BJ (cell line): ENCODE measurements at regions of chr20 and their contacts with region 1.

Region 1: DNA sequence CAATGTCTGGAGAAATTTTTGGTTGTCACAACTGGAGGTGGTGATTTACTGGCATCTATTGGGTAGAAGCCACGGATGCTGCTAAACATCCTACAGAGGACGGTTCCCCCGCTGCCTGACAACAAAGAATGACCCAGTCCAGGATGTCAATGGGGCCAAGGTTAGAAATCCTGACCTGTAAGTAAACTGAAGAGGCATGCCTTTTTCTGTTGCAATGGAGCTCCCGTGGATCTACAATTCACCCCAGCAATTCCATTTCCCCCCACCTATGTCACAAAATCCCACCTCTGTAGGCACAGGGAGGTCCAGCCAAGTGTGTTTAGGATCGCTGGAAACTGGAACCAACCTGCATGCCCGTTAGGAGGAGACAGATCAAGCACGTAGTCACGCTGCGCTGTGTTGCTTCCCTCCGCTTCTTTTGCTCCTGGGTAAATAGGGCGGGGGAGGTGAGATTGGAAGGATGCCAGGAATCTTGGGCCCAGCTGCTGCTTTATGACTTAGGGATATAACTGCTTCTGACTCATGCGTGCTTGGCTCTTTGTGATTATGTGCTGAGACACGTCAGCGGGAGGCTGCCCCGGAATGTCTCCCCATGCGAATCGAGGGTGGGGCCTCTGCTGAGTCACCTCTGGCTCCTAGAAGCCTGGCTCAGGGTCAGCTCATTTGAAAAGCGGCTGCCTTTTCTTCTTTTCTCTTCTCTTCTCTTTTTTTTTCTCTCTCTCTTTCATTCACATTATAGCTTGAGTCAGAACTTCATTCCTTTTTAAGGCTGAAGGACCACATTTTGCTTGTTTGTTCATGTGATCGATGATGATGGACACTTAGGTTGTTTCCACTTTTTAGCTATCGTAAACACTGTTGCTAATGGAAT is 12.4 kb upstream of the PEDS1 start:
- DNase-seq: peak; percentile 99
- H3K4me3 ChIP-seq: peak overlapping the region; percentile 25
- H3K27me3 ChIP-seq: no peaks in the 10 kb centered on the region
- CTCF ChIP-seq: no peak

Region 2: DNA sequence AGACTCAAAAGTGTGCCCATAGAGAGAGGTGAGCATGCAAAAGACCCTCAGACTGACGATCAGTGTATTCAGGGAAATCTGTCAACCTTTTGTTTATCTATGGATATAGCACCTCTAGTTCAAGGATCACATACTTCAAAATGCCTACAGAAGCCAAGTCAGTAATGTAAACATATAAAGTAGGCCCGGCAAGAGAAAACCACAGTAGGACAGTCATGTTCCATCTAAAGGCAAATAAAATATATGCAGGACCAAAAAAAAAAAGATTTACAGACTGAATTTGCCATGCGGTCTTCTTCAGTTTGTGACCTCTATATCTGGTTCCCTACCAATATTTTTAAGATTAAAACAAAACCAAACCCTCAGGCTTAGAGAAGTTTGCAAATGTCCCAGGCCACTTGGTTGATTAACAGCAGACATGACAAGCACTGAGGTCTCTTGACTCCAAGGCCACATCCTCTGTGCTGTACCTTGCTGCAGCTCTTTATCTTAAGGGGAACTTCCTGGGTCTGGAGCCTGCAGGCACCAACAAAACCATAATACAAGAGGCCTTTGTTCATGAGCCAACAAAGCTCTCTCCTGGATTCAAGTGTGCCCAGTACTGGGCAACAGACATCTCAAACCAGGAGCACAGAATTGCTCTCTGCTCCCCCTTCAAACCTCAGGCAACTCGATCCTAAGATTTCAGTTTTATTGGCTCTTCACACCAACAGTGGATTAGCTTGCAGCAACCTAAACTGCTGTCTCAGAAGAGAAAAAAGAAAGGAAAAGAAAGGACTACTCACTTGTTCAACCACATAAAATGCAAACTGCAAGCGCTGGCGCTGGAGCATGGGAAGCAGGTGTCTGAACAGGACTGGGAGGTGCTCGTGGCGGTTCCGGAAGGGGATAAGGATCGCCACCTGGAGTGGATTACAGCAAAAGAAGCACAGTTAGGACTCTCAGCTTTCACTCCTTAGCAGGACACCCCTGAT is 523.9 kb before region 1 on chr20:
- CTCF ChIA-PET with region 1: no interaction called
- POLR2A ChIA-PET with region 1: no interaction called
- DNase-seq: no peak
- H3K4me3 ChIP-seq: no peak overlapping the region
- H3K27me3 ChIP-seq: no peaks in the 10 kb centered on the region
- CTCF ChIP-seq: no peak

Region 3: GRCh38 chr20:50012282-50013263 is 153.3 kb before region 1 on chr20:
- CTCF ChIA-PET with region 1: no interaction called
- POLR2A ChIA-PET with region 1: no interaction called
- DNase-seq: no peak
- H3K4me3 ChIP-seq: no peak overlapping the region
- H3K27me3 ChIP-seq: no peaks in the 10 kb centered on the region
- CTCF ChIP-seq: no peak

Region 4: DNA sequence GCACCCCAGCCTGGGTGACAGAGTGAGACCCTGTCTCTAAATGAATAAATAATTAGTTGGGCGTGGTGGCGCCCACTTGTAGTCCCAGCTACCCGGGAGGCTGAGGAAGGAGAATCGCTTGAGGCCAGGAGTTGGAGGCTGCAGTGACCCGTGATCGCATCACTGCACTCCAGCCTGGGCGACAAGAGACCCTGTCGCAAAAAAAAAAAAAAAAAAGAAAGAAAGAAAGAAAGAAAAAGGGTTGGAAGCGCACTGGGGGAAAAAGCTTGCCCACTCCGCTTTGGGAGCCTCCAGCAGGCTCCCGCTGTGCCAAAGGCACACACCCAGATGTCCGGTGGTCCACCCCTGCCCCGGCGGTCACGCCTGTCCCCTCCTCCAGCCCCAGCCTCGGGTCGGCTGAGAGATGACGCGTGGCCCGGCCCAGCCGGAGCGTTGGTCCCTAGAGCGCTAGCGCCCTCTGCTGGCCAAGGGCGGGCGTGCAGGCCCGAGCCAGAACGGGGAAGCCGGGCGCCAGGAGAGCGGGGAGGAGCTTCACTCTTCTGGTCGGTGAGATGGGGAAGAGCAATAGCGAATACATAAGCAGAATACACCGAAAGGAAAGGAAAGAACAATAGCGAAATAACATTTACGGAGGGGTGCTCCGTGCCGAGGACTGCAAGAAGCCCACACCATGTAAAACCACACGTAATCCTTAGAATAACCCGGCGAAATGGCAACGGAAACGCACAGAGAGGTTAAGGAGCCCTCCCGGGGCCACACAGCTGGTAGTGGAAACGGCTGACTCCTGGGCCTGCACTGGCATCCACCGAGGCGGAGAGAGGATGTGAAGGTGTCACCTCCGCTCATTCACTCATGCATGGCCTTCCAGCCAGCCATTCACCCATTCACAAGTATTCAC is 94.7 kb before region 1 on chr20:
- CTCF ChIA-PET with region 1: interaction called, 24 read pairs
- POLR2A ChIA-PET with region 1: no interaction called
- DNase-seq: no peak
- H3K4me3 ChIP-seq: peak overlapping the region; percentile 30
- H3K27me3 ChIP-seq: no peaks in the 10 kb centered on the region
- CTCF ChIP-seq: peak; percentile 99

Region 5: GRCh38 chr20:50115591-50116372 is 50.1 kb before region 1 on chr20:
- CTCF ChIA-PET with region 1: interaction called, 169 read pairs
- POLR2A ChIA-PET with region 1: interaction called, 4 read pairs
- DNase-seq: peak; percentile 82
- H3K4me3 ChIP-seq: peak overlapping the region; percentile 47
- H3K27me3 ChIP-seq: no peaks in the 10 kb centered on the region
- CTCF ChIP-seq: no peak

Region 6: DNA sequence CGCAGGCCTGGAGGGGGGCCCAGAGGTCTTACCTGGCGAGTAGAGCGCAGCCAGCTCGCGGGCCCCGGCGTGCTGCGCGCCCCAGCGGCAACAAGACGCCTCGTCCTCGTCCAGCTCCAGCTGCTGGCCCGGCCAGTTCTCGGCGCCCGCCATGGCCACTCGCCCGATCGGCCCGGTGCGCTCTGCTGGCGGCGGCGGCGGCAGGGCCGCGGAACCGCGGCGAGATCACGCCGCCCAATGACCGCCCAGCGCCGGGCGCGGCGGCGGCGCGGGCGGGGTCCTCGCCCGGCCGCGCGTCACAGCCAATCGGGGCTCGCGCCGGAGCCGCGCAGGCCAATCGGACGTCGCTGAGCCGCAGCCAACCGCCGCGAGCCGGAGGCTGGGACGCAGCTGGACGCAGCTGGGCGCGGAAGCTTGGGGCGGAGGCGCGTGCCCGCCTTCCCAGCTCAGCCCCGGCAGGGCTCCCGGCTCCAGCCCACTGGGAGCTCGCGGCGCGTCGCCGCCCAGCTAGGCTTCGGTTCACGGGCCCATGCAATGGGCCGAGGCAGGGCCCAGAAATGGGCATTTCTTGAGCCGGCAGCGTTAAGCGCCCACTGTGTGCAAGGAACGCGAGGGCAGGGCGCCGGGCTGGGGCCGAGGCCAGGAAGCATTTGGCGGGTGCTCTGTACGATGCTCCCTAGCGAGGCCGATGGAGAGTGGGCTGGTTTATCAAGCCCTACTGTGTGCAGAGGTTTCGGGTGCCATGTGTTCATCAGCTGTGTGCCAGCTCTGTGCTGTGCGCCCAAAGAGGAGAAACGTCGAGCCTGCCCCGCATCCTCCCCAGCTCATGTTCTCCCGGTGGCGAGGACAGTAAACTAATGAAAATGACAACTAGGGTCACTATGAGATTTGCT is 12.2 kb before region 1 on chr20 and contains the start of gene PEDS1:
- CTCF ChIA-PET with region 1: interaction called, 12 read pairs
- POLR2A ChIA-PET with region 1: interaction called, 5 read pairs
- DNase-seq: no peak
- H3K4me3 ChIP-seq: peak within 1 kb of the TSS; percentile 98
- H3K27me3 ChIP-seq: no peaks in the 10 kb centered on the region
- CTCF ChIP-seq: no peak
- polyA plus RNA-seq, gene PEDS1: 26.1 and 52.3 TPM in 2 replicates

Region 7: GRCh38 chr20:50215101-50215690 is 49.3 kb after region 1 on chr20:
- CTCF ChIA-PET with region 1: no interaction called
- POLR2A ChIA-PET with region 1: no interaction called
- DNase-seq: no peak
- H3K4me3 ChIP-seq: no peak overlapping the region
- H3K27me3 ChIP-seq: no peaks in the 10 kb centered on the region
- CTCF ChIP-seq: no peak